ENCODE measurements at regions of chr2 and their contacts with region 1.

Region 1: GRCh38 chr2:43105586-43106558 is 120.5 kb downstream of the ZFP36L2 start:
- DNase-seq: peak; percentile 51 to 69
- ATAC-seq: peak; percentile 23 to 33 (median 31)
- H3K4me3 ChIP-seq: no peak overlapping the region
- H3K27ac ChIP-seq: peak overlapping the region; percentile 31
- H3K4me1 ChIP-seq: peaks cover 5% of the 10 kb centered on the region
- H3K27me3 ChIP-seq: no peaks in the 10 kb centered on the region
- CTCF ChIP-seq: peak; percentile 13

Region 2: GRCh38 chr2:43024515-43025011 is 81.3 kb before region 1 on chr2:
- intact Hi-C with region 1: loop called in 1 of 2 experiments (anchors 5 kb)
- DNase-seq: peak; percentile 72 to 74
- ATAC-seq: peak; percentile 77 to 87 (median 86)
- H3K4me3 ChIP-seq: no peak overlapping the region
- H3K27ac ChIP-seq: no peak overlapping the region
- H3K4me1 ChIP-seq: no peaks in the 10 kb centered on the region
- H3K27me3 ChIP-seq: no peaks in the 10 kb centered on the region
- CTCF ChIP-seq: peak; percentile 76

Region 3: GRCh38 chr2:43070039-43070438 is 35.8 kb before region 1 on chr2:
- intact Hi-C with region 1: no loop called
- DNase-seq: peak; percentile 63 to 83
- ATAC-seq: peak in 2 of 4 donors; percentile 23 to 40
- H3K4me3 ChIP-seq: no peak overlapping the region
- H3K27ac ChIP-seq: peak overlapping the region; percentile 28
- H3K4me1 ChIP-seq: peaks cover 43% of the 10 kb centered on the region
- H3K27me3 ChIP-seq: no peaks in the 10 kb centered on the region
- CTCF ChIP-seq: no peak

Measured in psoas muscle (tissue), 8 donors.